ENCODE measurements at regions of chr1 and their contacts with region 1.

Region 1: DNA sequence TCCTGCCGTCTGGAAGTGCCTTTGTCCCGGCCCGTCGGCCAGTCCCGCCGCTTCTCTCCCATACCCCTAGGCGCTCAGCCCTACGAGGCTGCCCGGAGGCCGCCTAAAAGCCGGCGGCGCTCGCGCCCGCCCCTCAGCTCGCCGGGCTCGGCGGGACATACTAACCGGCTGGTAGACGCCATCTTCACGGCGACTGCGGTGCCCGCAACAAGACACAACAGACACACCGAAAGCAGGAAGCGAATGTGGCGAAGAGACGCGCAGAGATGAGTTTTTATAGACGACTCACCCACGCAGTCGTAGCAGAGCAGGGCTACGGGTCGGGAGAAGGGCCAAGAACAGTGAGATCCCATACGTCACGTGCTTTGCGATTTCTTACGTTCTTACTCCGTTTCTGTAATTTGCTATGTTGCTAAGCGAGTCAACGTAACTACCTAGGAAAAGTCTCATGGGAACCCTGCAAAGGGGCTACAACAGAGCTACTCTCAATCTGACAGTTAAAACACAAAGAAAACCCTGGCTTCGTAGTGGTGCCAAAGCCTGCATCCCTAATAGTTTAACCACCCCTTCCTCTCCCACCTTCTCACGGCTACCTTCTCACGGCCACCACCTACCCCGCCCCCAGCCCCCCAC is at the start of gene GTF2B:
- DNase-seq: peak; percentile 97
- H3K4me3 Mint-ChIP-seq: peak within 1 kb of the TSS; percentile 82
- H3K27ac Mint-ChIP-seq: peak within 1 kb of the TSS; percentile 96
- H3K4me1 Mint-ChIP-seq: peaks cover 36% of the 10 kb centered on the region
- H3K27me3 Mint-ChIP-seq: no peaks in the 10 kb centered on the region
- total RNA-seq, gene GTF2B: 35.2 to 36.1 TPM

Region 2: DNA sequence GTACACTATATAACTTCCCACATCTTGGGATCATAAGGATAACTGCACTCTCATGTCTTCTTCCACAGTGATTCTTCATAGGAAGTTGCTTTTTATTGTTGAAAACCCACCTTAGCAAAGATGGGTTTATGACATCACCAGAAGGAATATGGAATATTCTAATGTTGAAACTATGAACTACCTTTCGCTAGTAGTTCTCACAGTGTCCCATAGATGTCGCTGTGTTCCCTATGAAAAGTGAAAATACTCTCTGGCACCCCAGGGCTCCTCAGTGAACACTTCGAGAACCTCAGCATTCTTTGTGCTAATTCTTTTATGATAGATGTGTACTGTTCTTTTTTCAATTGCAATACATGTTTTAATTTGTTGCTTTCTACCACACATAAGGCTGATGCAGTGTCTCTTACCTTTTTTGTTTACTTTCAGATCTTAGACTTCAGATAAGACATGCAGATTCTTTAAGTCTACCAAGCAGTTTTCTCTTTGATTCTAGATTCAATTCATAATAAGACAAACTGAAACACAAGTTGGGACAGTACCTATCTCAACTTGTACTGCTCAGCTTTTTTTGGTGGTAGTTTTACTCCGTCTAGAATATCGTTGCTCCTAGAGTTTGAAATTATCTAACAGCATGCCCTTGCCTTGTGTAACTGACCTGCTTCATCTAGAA is 90.9 kb before region 1 on chr1:
- CTCF ChIA-PET with region 1: interaction called, 3 read pairs
- intact Hi-C with region 1: loop called (anchors 1 kb)
- DNase-seq: peak; percentile 72
- H3K4me3 Mint-ChIP-seq: no peak overlapping the region
- H3K27ac Mint-ChIP-seq: peak overlapping the region; percentile 74
- H3K4me1 Mint-ChIP-seq: peaks cover 17% of the 10 kb centered on the region
- H3K27me3 Mint-ChIP-seq: no peaks in the 10 kb centered on the region

Region 3: DNA sequence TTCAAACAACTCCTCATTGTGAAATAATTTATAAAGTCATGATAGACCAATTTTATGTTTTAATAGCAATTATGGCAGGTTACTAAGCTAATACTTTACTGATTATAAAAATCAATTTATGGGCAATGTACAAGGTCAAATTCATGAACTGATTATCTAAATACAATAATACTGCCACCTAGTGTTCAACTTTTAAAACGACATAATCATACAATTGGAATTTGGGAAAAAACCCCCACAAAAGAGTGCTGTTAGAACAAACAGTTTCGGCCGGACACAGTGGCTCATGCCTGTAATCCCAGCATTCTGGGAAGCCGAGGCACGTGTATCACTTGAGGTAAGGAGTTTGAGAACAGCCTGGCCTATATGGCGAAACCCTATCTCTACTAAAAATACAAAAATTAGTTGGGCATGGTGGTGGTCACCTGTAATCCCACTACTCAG is 14.0 kb before region 1 on chr1:
- CTCF ChIA-PET with region 1: interaction called, 25 read pairs
- intact Hi-C with region 1: loop called (anchors 1 kb)
- DNase-seq: no peak
- H3K4me3 Mint-ChIP-seq: no peak overlapping the region
- H3K27ac Mint-ChIP-seq: no peak overlapping the region
- H3K4me1 Mint-ChIP-seq: peaks cover 43% of the 10 kb centered on the region
- H3K27me3 Mint-ChIP-seq: no peaks in the 10 kb centered on the region

Region 4: GRCh38 chr1:89820422-89821321 is 929.2 kb after region 1 on chr1 and contains the start of gene LRRC8D:
- CTCF ChIA-PET with region 1: no interaction called
- intact Hi-C with region 1: loop called (anchors 5 kb)
- DNase-seq: peak; percentile 81
- H3K4me3 Mint-ChIP-seq: peak within 1 kb of the TSS; percentile 85
- H3K27ac Mint-ChIP-seq: peak within 1 kb of the TSS; percentile 26
- H3K4me1 Mint-ChIP-seq: peaks cover 34% of the 10 kb centered on the region
- H3K27me3 Mint-ChIP-seq: no peaks in the 10 kb centered on the region
- total RNA-seq, gene LRRC8D: 14.4 to 15.0 TPM

Measured in activated naive CD4-positive, alpha-beta T cell treated with anti-CD3 and anti-CD28 coated beads for 36 hours (primary cell).